Testis (tissue), 5 donors: ENCODE measurements at regions of chr1 and their contacts with region 1.

Region 1: DNA sequence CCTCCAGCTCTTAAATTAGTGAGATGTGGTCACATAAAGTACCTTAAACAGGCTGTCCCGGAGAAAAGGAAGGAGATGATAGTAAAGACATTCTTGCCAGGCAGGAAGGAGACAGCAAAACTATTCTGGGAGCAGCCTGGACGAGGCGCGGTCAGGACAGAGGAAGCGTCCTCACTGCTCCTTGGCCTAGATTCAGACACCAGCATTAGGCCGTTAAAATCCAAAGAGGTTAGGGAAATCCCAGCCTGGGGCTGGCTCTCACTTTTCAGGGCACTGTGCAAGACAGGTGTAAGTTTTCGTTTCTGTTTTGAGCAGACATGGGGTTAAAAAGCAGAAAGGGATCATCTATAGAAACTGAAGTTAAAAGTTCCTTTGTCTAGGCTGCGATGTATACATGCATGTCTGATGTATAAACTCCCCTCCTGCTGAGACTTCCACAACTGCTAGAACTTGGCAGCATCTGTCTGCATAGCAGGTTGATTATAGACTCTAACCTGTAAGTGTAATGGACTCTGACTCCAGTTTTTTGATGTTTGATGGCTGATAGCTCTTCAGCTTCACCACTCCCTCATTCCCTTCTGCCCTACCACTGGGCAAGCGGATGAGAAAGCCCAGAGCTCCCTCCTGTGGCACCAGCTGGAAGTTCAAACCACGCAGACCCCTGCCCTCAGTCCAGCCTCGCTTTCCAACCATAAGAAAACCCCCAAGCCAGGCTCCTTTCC is 21.5 kb downstream of the STPG1 start:
- DNase-seq: peak; percentile 68
- H3K4me3 ChIP-seq: no peak overlapping the region
- H3K27ac ChIP-seq: peak overlapping the region; percentile 60 to 82
- H3K4me1 ChIP-seq: peaks cover 5% of the 10 kb centered on the region
- H3K27me3 ChIP-seq: no peaks in the 10 kb centered on the region
- CTCF ChIP-seq: peak; percentile 43 to 63 (median 62)
- POLR2A ChIP-seq: no peak

Region 2: DNA sequence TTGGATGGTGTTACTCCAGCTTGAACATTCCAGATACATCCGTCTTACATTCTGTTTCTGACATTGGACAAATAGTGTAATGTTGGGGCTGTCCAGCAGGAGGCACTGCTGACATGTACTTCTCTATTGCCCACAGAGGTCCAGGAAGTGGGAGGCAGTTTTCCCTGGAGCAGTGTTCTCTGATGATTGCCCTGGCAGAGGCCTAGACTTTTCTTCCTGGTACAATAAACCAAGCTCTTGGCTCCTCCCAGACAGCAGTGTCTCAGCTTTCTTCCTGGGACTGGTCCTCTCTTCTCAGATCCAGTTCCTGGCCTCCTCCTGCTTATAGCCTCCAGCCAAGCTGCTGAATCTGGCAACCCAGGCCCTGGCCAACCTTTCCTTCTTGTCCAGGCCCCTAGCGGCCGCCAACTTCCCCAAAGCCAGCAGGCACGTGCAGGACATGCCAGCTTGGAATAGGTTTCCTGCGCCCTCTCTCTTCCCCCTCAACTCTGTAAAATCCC is 190.1 kb before region 1 on chr1:
- intact Hi-C with region 1: loop called (anchors 2 kb)
- DNase-seq: peak; percentile 93
- H3K4me3 ChIP-seq: no peak overlapping the region
- H3K27ac ChIP-seq: no peak overlapping the region
- H3K4me1 ChIP-seq: peaks cover 9% of the 10 kb centered on the region
- H3K27me3 ChIP-seq: no peaks in the 10 kb centered on the region
- CTCF ChIP-seq: peak; percentile 83 to 92 (median 86)
- POLR2A ChIP-seq: no peak